Right lobe of liver (tissue), 6 donors: ENCODE measurements at regions of chr11 and their contacts with region 1.

Region 1: GRCh38 chr11:134139873-134140331 is 71.0 kb downstream of the JAM3 start:
- DNase-seq: no peak
- ATAC-seq: peak; percentile 89 to 94 (median 90)
- H3K4me3 ChIP-seq: no peak overlapping the region
- H3K27ac ChIP-seq: no peak overlapping the region
- H3K4me1 ChIP-seq: no peaks in the 10 kb centered on the region
- H3K27me3 ChIP-seq: no peaks in the 10 kb centered on the region
- CTCF ChIP-seq: peak; percentile 67 to 75 (median 72)
- POLR2A ChIP-seq: no peak

Region 2: GRCh38 chr11:133927690-133928627 is 211.9 kb before region 1 on chr11:
- intact Hi-C with region 1: loop called in 1 of 2 experiments (anchors 10 kb)
- DNase-seq: peak; percentile 59 to 76 (median 68)
- ATAC-seq: peak; percentile 84 to 94 (median 88)
- H3K4me3 ChIP-seq: no peak overlapping the region
- H3K27ac ChIP-seq: no peak overlapping the region
- H3K4me1 ChIP-seq: no peaks in the 10 kb centered on the region
- H3K27me3 ChIP-seq: no peaks in the 10 kb centered on the region
- CTCF ChIP-seq: peak; percentile 54 to 77 (median 69)
- POLR2A ChIP-seq: no peak

Region 3: DNA sequence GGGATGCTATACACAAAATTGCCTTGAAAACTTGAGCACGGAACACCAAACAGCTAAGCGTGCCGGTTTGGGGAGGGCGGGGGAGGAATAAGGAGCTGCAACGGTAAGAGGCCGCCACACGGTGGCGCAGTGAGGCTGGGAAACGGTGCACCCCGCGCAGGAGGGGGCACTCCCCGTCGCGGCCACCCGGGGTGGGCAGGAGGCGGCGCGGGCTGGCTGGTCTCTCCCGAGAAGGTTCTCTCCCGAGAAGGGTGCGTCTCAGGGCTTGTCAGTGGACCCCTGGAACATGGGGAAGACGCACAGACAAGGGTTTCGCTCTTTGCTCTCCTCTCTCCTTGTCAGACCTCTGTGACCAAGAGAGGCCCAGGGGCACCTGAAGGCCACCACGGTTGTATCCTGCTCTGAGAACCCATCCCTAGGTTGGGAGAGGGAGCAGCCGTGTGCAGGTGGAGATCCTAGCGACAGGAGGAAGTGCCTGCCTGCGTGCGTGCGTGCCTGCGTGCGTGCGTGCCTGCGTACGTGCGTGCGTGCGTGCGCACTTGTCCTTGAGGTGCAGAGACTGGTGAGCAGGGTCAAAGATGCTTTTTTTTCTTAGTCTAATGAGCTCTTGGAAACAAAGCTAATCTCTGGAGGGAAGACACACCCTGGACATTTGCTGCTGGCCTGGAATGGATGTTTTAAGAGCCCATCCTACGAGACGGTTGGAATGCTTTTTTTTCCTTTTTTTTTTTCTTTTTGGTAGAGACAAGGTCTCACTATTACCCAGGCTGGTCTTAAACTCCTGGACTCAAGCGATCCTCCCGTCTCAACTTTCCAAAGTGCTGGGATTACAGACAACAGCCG is 89.1 kb before region 1 on chr11:
- intact Hi-C with region 1: loop called (anchors 10 kb)
- DNase-seq: peak; percentile 67 to 69 (median 69)
- ATAC-seq: peak; percentile 90 to 97 (median 94)
- H3K4me3 ChIP-seq: peak overlapping the region in 1 of 3 donors; percentile 21
- H3K27ac ChIP-seq: no peak overlapping the region
- H3K4me1 ChIP-seq: no peaks in the 10 kb centered on the region
- H3K27me3 ChIP-seq: peaks cover 0 to 12% of the 10 kb centered on the region in 2 donors
- CTCF ChIP-seq: peak; percentile 63 to 91 (median 88)
- POLR2A ChIP-seq: no peak

Region 4: GRCh38 chr11:134097166-134097565 is 42.7 kb before region 1 on chr11:
- intact Hi-C with region 1: no loop called
- DNase-seq: no peak
- ATAC-seq: no peak
- H3K4me3 ChIP-seq: no peak overlapping the region
- H3K27ac ChIP-seq: no peak overlapping the region
- H3K4me1 ChIP-seq: no peaks in the 10 kb centered on the region
- H3K27me3 ChIP-seq: no peaks in the 10 kb centered on the region
- CTCF ChIP-seq: no peak
- POLR2A ChIP-seq: no peak